ENCODE measurements at regions of chr17 and their contacts with region 1.

Region 1: GRCh38 chr17:47229535-47230443 is 20.6 kb downstream of the MYL4 start:
- DNase-seq: peak; percentile 83
- CTCF ChIP-seq: peak; percentile 95

Region 2: GRCh38 chr17:47072886-47073285 is 156.9 kb before region 1 on chr17:
- CTCF ChIA-PET with region 1: no interaction called
- POLR2A ChIA-PET with region 1: no interaction called
- DNase-seq: no peak
- CTCF ChIP-seq: no peak

Region 3: GRCh38 chr17:47119746-47120520 is 109.9 kb before region 1 on chr17:
- CTCF ChIA-PET with region 1: no interaction called
- POLR2A ChIA-PET with region 1: no interaction called
- DNase-seq: no peak
- CTCF ChIP-seq: no peak

Region 4: DNA sequence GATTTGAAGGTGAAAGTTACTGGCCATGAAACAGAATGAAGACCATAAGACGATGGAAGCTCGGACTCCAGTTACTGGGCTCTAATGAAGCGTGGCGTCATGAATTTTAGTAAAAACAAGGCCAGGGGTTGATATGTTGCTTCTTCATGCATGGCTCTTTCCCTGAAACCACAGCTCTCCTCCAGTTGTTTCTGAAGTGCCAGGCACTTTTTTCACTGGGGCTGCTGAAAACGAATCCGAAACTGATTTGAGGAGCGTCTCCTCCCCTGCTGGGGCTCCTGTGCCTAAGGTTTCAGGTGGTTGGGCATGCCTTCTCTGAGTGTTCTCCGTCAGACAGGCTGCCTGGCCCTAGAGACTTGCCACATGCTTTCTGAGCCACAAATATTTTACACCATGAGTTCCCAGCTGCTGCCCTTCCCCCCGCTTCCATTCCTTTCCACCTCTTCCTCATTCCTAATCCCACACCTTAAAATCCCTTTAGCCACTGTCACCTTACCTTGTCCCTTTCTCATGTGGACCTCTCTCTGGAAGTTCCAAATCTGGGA is 24.3 kb before region 1 on chr17:
- CTCF ChIA-PET with region 1: interaction called, 29 read pairs
- POLR2A ChIA-PET with region 1: no interaction called
- DNase-seq: peak; percentile 59
- CTCF ChIP-seq: no peak

Region 5: DNA sequence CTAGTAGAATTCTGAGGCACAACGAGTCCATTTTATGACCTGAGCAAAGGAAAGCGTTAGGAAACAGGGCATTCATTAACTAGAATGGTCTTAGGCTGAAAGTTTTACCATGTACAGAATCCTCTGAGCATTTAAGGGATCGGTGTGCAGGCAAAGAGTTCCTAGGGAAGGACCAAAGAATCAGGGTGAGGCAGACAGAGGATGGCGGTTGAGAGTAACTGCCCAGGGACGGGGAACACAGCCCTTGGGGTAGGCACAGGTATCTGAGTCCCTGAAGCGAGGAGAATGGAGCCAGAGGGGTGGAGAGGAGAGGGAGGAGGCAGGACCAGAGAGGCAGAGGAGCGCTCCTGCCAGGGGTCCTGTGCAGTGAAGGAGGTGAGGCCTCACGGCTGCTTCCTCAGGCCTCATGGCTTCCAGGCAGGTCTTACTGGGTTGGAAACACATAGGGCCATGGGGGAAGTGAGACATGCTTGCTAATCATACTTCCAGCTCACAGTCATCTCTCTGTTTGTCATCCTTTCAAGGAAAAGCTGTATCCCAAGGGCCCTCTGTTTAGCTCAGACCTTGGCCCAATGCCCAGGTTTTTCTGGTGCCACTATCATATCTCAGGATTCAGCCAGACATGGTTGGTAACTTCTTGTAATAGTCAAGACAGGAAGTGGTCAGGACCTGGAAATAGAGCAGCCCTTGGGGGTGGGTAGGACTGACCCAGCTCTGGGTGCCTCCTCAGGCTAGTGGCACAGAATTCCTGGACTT is 10.0 kb after region 1 on chr17:
- CTCF ChIA-PET with region 1: interaction called, 29 read pairs
- POLR2A ChIA-PET with region 1: no interaction called
- DNase-seq: no peak
- CTCF ChIP-seq: no peak

Region 6: DNA sequence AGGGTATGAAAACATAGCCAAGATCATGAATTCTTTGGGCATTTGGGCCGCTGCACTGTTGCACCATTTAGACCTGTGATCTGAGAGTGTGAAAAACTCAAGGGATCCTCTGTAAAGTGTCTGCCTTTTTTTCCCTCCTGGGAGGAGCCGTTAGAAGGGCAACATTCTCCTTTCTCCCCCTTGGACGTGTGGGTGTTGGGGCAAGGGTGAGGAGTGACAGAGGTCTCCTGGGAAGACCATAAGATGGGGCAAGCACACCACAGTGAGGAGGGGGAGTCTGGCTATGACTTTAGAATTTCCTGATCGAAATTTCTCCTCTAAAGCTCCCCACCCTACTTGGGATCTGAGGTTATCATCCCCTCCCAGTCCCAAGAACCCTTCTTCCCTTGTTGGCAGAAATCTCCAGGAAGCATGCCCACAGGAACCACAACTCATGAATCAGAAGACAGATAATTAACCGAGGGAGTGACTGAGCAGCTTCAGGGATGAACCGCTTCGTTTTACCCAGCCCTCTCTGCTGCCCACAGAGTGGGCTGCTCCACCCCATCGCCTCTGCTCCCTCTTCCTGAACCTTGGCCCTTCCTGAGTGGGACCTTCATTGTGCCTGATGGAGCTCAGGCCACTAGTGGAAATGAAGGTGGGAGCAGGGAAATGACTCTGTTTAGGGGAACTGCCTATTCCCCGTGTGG is 28.0 kb after region 1 on chr17:
- CTCF ChIA-PET with region 1: interaction called, 15 read pairs
- POLR2A ChIA-PET with region 1: no interaction called
- DNase-seq: no peak
- CTCF ChIP-seq: no peak